Activated CD4-positive, alpha-beta T cell treated with anti-CD3 and anti-CD28 coated beads, Interleukin-2, amount 10 ng/mL, durations not matched to agents 7 days and 5 days (primary cell): ENCODE measurements at regions of chr1 and their contacts with region 1.

Region 1: DNA sequence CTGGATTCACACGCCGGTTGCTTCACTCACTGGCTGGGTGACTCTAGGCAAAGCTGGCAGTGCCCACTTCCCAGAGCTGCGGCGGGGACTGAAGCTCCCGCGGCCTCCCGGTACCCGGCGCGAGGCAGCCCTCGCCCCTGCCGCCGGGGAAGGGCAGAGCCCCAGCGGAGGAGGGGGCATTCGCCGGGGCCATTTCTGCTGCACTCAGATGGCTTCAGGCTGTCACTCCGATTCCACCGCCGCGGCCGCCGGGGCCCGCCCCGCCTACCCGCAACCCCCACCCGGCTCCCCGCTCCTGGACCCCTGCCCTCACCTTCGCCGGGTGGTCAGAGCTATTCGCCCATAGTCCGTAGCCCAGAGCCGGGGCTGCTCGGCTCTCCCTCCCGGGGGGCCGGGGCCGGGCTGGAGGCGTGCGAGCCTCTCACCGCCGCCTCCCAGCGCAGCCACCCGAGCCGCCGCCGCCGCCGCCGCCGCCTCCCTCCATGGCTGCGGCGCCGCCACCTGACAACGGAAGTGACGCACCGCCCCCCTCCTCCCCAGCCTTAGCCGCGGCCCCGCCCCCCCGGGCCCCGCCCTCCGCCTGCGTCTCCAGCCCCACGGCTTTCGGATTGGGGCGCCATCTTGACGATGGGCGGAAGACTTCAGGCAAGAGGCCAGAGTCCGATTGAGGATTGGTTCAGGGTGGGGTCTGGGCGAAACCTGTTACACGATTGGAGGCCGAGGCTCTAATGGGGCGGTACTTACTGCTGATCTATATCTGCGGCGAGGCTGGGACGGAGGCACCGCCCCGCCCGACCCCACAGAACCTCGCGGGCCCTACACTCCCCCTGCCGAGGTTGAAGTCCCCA is at the start of gene STK40:
- DNase-seq: peak; percentile 99
- H3K4me3 Mint-ChIP-seq: peak within 1 kb of the TSS; percentile 82
- H3K27ac Mint-ChIP-seq: peak within 1 kb of the TSS; percentile 99
- H3K4me1 Mint-ChIP-seq: peaks cover 67% of the 10 kb centered on the region
- H3K27me3 Mint-ChIP-seq: no peaks in the 10 kb centered on the region
- total RNA-seq, gene STK40: 53.7 to 59.1 TPM

Region 2: DNA sequence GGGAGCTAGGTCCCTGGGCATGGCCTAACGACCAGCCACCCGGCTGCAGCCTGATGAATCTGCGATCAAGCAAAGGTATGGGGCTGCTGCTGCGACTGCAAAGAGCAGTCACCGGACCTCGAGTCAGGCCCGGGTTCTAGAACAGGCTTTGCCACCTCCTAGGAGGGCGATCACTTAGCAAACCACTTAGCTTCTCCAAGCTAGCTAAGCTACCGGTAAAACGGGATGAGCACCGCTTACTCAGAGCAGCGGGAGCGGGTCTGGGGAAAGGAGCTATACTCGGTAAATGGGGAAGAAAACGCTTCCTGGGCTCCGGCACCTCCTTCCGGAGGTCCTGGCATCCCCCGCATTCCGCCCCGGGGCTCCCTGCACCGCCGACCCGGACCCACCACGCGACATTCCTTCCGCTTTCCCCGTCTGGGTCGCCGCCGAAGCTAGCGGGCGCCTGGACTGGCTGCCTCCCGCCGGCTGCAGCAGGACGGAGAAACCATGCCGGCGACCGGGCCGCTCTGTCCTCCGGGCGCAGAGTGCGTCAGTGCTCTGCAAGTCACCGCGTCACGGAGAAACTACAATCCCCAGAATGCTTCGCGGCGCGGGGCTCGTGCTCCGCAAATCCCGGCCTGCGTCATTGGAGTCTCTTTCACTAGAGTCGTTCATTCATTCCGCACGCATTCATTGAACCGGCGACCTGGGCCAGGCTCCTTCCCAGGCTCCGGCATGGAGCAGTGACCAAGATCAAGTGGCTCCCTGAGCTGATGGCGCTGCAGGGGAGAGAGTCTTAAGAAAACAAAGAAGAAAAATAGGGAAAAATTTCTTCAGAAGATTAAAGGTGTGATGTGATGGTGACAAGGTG is 12.0 kb after region 1 on chr1 and contains the start of gene LSM10:
- CTCF ChIA-PET with region 1: interaction called, 55 read pairs
- POLR2A ChIA-PET with region 1: interaction called, 3 read pairs
- DNase-seq: peak; percentile 91
- H3K4me3 Mint-ChIP-seq: peak within 1 kb of the TSS; percentile 92
- H3K27ac Mint-ChIP-seq: peak within 1 kb of the TSS; percentile 96
- H3K4me1 Mint-ChIP-seq: peaks cover 38% of the 10 kb centered on the region
- H3K27me3 Mint-ChIP-seq: no peaks in the 10 kb centered on the region
- total RNA-seq, gene LSM10: 39.3 to 39.4 TPM

Region 3: DNA sequence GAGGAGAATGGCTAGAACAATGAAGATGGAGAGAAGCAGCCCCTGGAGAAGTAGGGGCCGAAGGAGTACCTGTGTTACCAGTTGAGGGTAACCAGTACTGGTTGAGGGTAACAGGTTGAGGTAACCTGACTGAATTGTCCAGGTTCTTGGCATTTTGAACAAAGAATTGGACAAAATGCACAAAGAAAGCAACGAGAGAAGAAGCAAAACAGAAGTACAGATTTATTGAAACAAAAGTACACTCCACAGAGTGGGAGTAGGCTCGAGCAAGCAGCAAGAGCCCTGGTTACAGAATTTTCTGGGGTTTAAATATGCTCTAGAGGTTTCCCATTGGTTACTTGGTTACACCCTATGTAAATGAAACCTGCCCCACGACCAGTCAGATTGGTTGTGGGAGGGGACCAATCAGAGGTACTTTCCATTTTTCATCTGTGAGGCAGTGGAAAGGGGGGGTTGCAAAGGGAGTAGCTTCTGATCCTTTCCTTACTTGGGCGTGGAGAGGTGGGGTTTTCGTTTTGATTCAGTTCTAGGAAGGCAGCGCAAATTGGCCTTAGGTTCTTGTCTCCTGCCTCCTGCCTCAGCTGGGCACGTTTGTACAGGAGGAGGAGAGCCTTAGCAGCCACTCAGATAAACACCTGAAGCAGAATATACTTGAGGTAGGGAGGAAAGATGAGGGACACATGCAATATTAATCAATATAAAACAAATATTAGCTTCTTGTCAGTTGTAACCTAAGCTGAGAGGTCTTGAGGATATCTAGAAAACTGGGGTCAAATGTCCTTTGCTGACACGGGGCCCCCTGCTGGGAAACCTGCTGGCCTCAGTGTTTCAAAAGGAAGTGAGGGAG is 26.3 kb after region 1 on chr1:
- CTCF ChIA-PET with region 1: interaction called, 10 read pairs
- POLR2A ChIA-PET with region 1: interaction called, 5 read pairs
- DNase-seq: peak; percentile 88
- H3K4me3 Mint-ChIP-seq: peak overlapping the region; percentile 42
- H3K27ac Mint-ChIP-seq: peak overlapping the region; percentile 95
- H3K4me1 Mint-ChIP-seq: peaks cover 29% of the 10 kb centered on the region
- H3K27me3 Mint-ChIP-seq: no peaks in the 10 kb centered on the region